ENCODE measurements at regions of chr18 and their contacts with region 1.

Region 1: DNA sequence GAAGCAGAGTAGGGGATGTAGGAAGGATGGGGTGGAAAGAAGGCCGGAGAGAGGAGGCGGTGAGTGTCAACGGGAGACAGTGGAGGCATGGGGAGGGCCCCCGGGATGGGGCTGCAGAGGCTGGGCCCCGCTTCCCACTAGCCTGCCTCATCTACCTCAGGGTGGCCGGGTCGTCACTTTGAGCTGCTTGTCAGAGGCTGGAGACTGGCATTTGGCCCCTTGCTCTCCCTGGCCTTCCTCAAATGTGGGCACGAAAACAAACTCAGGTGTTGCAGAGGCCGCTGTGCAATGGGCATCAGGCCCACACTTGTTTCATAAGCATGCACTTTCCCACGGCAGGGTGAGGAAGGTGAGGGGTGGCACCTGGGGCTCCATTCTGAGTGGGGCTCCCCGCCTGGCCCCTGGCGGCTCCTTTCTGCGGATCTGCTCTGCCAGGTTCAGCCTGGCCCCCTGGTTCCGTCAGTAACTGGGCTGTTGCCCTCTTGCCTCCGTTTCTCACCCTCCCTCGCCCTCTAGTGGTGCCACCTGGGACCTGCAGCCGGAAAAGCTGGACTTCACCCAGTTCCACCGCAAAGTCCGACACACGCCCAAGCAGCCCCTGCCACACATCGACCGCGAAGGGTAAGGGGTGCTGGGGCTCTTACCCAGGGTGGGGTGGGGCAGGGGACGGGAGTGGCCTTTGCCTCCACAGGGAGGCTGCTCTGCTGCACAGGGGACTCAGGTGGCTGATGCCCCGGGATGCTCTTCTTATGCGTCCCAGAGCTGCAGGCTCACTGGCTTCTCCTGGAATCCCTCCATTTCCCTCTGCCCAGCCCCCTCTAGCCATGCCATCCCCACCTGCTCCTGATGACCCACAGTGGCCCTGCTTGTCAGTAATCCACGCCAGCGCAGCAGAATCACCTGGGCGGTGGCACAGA is 125.4 kb downstream of the CTIF start:
- DNase-seq: peak; percentile 36
- ATAC-seq: peak; percentile 36
- H3K4me3 ChIP-seq: no peak overlapping the region
- H3K27ac ChIP-seq: no peak overlapping the region
- H3K4me1 ChIP-seq: peaks cover 25% of the 10 kb centered on the region
- H3K27me3 ChIP-seq: no peaks in the 10 kb centered on the region
- CTCF ChIP-seq: peak; percentile 82
- POLR2A ChIP-seq: no peak
- RAD21 ChIP-seq: peak; percentile 88

Region 2: DNA sequence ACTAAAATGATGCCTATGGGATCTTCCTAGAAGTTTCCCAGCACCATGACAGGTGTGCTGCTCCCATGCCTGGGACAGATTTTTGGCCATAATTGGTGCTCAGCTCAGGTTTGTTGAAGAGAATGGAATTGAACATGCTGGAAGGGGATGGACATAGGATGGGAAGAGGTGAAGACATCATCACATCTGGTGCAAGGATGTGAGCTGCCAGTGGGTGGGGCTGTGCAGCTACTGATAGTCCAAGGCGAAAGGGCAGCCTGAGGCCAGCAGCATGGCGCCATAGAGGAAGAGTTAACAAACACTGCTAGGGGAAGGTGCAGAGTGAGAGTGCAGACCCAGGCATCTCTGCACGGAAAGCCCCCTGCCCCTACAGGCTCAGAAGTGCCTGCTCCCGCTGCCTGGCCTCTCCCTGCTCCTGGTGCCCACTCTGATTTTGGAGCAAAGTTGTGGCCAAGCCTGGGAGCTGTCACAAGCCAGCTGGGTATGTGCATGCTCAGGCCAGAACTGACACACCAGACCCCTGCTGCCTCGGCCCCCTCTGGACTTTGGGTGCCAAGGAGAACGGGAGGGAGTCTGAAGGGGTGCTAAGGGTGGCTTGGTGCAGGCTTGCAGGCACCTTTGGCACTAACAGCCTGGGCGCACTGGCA is 433.6 kb before region 1 on chr18:
- CTCF ChIA-PET with region 1: no interaction called
- POLR2A ChIA-PET with region 1: no interaction called
- dilution Hi-C with region 1: no loop called
- in situ Hi-C with region 1: no loop called
- intact Hi-C with region 1: loop called (anchors 5 kb)
- DNase-seq: peak; percentile 31
- ATAC-seq: peak; percentile 89
- H3K4me3 ChIP-seq: no peak overlapping the region
- H3K27ac ChIP-seq: no peak overlapping the region
- H3K4me1 ChIP-seq: no peaks in the 10 kb centered on the region
- H3K27me3 ChIP-seq: peaks cover 8% of the 10 kb centered on the region; the same call in 1 of the 2 replicates
- CTCF ChIP-seq: peak; percentile 51
- POLR2A ChIP-seq: no peak
- RAD21 ChIP-seq: peak; percentile 70

Region 3: GRCh38 chr18:48475635-48476549 is 188.3 kb before region 1 on chr18:
- CTCF ChIA-PET with region 1: interaction called, 17 read pairs
- POLR2A ChIA-PET with region 1: no interaction called
- dilution Hi-C with region 1: no loop called
- in situ Hi-C with region 1: loop called (anchors 5 kb)
- intact Hi-C with region 1: loop called (anchors 1 kb)
- DNase-seq: peak; percentile 82
- ATAC-seq: peak; percentile 96
- H3K4me3 ChIP-seq: no peak overlapping the region
- H3K27ac ChIP-seq: no peak overlapping the region
- H3K4me1 ChIP-seq: no peaks in the 10 kb centered on the region
- H3K27me3 ChIP-seq: peaks cover 12% of the 10 kb centered on the region
- CTCF ChIP-seq: peak; percentile 86
- POLR2A ChIP-seq: no peak
- RAD21 ChIP-seq: peak; percentile 97

Region 4: DNA sequence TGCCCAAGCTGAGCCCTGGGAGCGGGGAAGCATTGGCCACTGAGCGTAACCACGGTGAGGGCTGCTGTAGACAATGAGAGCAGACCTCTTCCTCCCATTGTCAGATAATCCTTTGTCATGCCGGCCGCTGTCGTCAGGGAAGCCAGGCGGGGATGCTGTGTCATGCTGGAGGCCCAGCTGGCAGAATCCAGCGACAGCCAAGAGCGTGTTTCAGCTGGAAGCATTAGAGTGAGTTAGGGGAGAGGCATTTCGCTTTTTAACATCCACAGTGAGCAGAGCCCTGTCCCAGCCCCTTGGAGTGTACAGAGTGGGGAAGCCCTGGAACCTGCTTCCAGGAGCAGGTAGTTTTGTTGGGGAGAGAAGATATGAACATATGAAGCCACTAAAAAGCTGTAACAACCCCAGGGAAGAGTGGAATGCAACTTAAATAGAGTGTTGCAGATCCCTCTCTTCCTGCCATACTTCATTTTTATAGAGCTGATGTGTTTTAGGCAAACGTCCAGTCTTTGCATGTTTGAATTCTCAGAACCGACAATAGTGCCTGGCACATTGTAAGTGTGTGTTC is 118.3 kb before region 1 on chr18:
- CTCF ChIA-PET with region 1: interaction called, 3 read pairs
- POLR2A ChIA-PET with region 1: no interaction called
- dilution Hi-C with region 1: no loop called
- in situ Hi-C with region 1: loop called (anchors 5 kb)
- intact Hi-C with region 1: loop called (anchors 1 kb)
- DNase-seq: peak; percentile 90
- ATAC-seq: peak; percentile 40
- H3K4me3 ChIP-seq: no peak overlapping the region
- H3K27ac ChIP-seq: peak overlapping the region; percentile 81
- H3K4me1 ChIP-seq: peaks cover 58% of the 10 kb centered on the region
- H3K27me3 ChIP-seq: no peaks in the 10 kb centered on the region
- CTCF ChIP-seq: no peak
- POLR2A ChIP-seq: peak; percentile 17; the same call in 1 of the 2 replicates
- RAD21 ChIP-seq: peak; percentile 16; the same call in 1 of the 2 replicates

Region 5: GRCh38 chr18:48605408-48605845 is 58.8 kb before region 1 on chr18:
- CTCF ChIA-PET with region 1: no interaction called
- POLR2A ChIA-PET with region 1: no interaction called
- dilution Hi-C with region 1: no loop called
- in situ Hi-C with region 1: no loop called
- intact Hi-C with region 1: loop called (anchors 10 kb)
- DNase-seq: peak; percentile 43
- ATAC-seq: no peak
- H3K4me3 ChIP-seq: no peak overlapping the region
- H3K27ac ChIP-seq: no peak overlapping the region
- H3K4me1 ChIP-seq: peaks cover 24% of the 10 kb centered on the region
- H3K27me3 ChIP-seq: no peaks in the 10 kb centered on the region
- CTCF ChIP-seq: peak; percentile 49
- POLR2A ChIP-seq: no peak
- RAD21 ChIP-seq: peak; percentile 38

Region 6: DNA sequence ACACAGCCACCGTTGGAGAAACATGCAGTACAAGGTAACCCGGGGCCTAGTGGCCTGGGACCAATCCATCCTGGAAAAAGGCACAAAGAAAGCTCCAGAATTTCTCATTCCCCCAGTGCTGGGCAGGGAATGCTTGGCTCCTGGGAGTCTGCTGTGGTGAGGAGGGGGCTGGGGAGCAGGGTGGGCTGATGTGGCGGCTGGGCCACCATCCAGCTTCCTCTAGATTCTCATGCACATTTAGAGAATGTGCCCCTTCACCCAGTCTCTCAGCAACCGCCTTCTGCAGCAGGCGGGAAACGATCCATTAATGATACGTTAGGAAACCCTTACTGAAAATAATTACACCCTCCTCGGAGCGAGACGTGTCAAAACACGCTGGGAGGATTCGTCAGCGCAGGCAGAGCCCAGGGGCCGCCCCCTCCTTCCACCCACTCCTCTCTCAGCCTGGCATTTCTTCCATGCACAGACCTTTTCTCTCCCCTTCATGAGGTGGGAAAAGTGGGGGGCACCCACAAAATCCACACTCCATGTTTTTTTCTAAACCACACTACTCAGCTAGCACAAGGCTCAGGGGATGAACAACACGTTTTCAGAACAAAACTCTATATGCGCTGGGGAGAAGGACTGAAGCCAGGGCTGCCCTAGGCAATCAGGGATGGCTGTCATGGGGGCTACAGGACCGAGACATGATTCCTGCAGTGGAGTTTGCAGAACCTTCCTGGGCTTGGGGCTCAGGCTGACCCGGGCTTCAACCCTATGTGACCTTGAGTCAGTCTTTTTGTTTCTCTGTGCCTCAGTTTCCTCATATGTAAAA is 342.7 kb after region 1 on chr18:
- CTCF ChIA-PET with region 1: no interaction called
- POLR2A ChIA-PET with region 1: no interaction called
- dilution Hi-C with region 1: no loop called
- in situ Hi-C with region 1: no loop called
- intact Hi-C with region 1: no loop called
- DNase-seq: no peak
- ATAC-seq: no peak
- H3K4me3 ChIP-seq: no peak overlapping the region
- H3K27ac ChIP-seq: no peak overlapping the region
- H3K4me1 ChIP-seq: peaks cover 6% of the 10 kb centered on the region
- H3K27me3 ChIP-seq: no peaks in the 10 kb centered on the region; the same call in 1 of the 2 replicates
- CTCF ChIP-seq: no peak
- POLR2A ChIP-seq: no peak
- RAD21 ChIP-seq: no peak